ENCODE measurements at regions of chr19 and their contacts with region 1.

Region 1: GRCh38 chr19:10653715-10654492 is at the start of gene ILF3:
- DNase-seq: peak; percentile 100
- H3K4me3 ChIP-seq: peak within 1 kb of the TSS; percentile 92 to 94
- H3K4me3 Mint-ChIP-seq: peak within 1 kb of the TSS; percentile 93 to 98 (median 96)
- H3K27ac ChIP-seq: peak within 1 kb of the TSS; percentile 100
- H3K27ac Mint-ChIP-seq: peak within 1 kb of the TSS; percentile 98 to 100 (median 99)
- H3K4me1 ChIP-seq: peaks cover 57% of the 10 kb centered on the region
- H3K4me1 Mint-ChIP-seq: peaks cover 24 to 58% (median 39%) of the 10 kb centered on the region in 4 donors
- H3K27me3 ChIP-seq: no peaks in the 10 kb centered on the region
- H3K27me3 Mint-ChIP-seq: peaks cover 0 to 4% of the 10 kb centered on the region in 2 donors
- total RNA-seq, gene ILF3: 291 to 302 TPM

Region 2: GRCh38 chr19:10565567-10566407 is 88.1 kb before region 1 on chr19 and contains the start of gene KRI1:
- CTCF ChIA-PET with region 1: no interaction called
- POLR2A ChIA-PET with region 1: interaction called, 16 read pairs
- intact Hi-C with region 1: loop called (anchors 1 kb)
- DNase-seq: peak; percentile 98 to 100 (median 99)
- H3K4me3 ChIP-seq: peak within 1 kb of the TSS; percentile 95 to 97
- H3K4me3 Mint-ChIP-seq: peak within 1 kb of the TSS; percentile 90 to 99 (median 98)
- H3K27ac ChIP-seq: peak within 1 kb of the TSS; percentile 94
- H3K27ac Mint-ChIP-seq: peak within 1 kb of the TSS; percentile 95 to 99 (median 98)
- H3K4me1 ChIP-seq: peaks cover 37% of the 10 kb centered on the region
- H3K4me1 Mint-ChIP-seq: peaks cover 22 to 50% (median 33%) of the 10 kb centered on the region in 4 donors
- H3K27me3 ChIP-seq: no peaks in the 10 kb centered on the region
- H3K27me3 Mint-ChIP-seq: no peaks in the 10 kb centered on the region
- total RNA-seq, gene KRI1: 72.7 to 73.0 TPM

Region 3: GRCh38 chr19:10602330-10603083 is 51.4 kb before region 1 on chr19:
- CTCF ChIA-PET with region 1: interaction called, 3 read pairs
- POLR2A ChIA-PET with region 1: interaction called, 51 read pairs
- intact Hi-C with region 1: loop called (anchors 1 kb)
- DNase-seq: peak; percentile 82 to 84 (median 84)
- H3K4me3 ChIP-seq: peak overlapping the region; percentile 85 to 94
- H3K4me3 Mint-ChIP-seq: peak overlapping the region; percentile 98 to 99 (median 99)
- H3K27ac ChIP-seq: peak overlapping the region; percentile 96
- H3K27ac Mint-ChIP-seq: peak overlapping the region; percentile 99 to 100 (median 100)
- H3K4me1 ChIP-seq: peaks cover 29% of the 10 kb centered on the region
- H3K4me1 Mint-ChIP-seq: peaks cover 17 to 34% (median 21%) of the 10 kb centered on the region in 4 donors
- H3K27me3 ChIP-seq: no peaks in the 10 kb centered on the region
- H3K27me3 Mint-ChIP-seq: no peaks in the 10 kb centered on the region

Region 4: DNA sequence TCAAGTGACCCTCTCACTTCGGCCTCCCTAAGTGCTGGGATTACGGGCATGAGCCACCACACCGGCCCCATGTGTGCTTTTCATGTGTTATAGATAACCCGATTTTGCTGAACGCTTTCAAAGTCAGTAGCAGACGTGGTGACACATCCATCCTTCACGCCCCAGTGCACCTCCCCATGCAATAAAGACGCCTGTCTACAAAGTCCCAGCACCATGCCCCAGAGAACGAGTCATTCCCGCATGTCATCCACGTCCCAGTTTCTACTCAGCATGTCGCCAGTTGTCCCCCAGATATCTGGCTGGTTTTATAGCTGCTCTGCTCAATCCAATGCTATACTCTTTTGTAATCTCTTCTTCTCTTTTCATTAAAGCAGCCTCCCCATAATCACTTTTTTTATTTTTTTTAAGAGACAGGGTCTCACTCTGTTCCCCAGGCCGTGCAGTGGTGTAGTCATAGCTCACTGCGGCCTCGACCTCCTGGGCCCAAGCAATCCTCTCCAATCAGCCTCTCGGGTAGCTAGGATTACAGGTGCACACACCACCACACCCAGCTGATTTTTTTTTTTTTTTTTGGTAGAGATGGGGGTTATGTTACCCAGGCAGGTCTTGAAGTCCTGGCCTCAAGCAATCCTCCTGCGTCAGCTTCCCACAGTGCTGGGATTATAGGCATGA is 106.5 kb after region 1 on chr19:
- CTCF ChIA-PET with region 1: no interaction called
- POLR2A ChIA-PET with region 1: no interaction called
- intact Hi-C with region 1: loop called (anchors 2 kb)
- DNase-seq: peak in 1 of 5 donors; percentile 80
- H3K4me3 ChIP-seq: peak overlapping the region in 1 of 2 donors; percentile 20
- H3K4me3 Mint-ChIP-seq: peak overlapping the region; percentile 50 to 89 (median 80)
- H3K27ac ChIP-seq: peak overlapping the region; percentile 48
- H3K27ac Mint-ChIP-seq: peak overlapping the region; percentile 87 to 98 (median 95)
- H3K4me1 ChIP-seq: peaks cover 88% of the 10 kb centered on the region
- H3K4me1 Mint-ChIP-seq: peaks cover 51 to 94% (median 74%) of the 10 kb centered on the region in 4 donors
- H3K27me3 ChIP-seq: no peaks in the 10 kb centered on the region
- H3K27me3 Mint-ChIP-seq: no peaks in the 10 kb centered on the region

Region 5: GRCh38 chr19:10870955-10871603 is 217.2 kb after region 1 on chr19 and contains the start of gene CARM1:
- CTCF ChIA-PET with region 1: no interaction called
- POLR2A ChIA-PET with region 1: interaction called, 3 read pairs
- intact Hi-C with region 1: loop called (anchors 1 kb)
- DNase-seq: peak; percentile 99 to 100 (median 99)
- H3K4me3 ChIP-seq: peak within 1 kb of the TSS; percentile 47 to 55
- H3K4me3 Mint-ChIP-seq: peak within 1 kb of the TSS; percentile 81 to 94 (median 86)
- H3K27ac ChIP-seq: peak within 1 kb of the TSS; percentile 55
- H3K27ac Mint-ChIP-seq: peak within 1 kb of the TSS; percentile 76 to 96 (median 92)
- H3K4me1 ChIP-seq: peaks cover 20% of the 10 kb centered on the region
- H3K4me1 Mint-ChIP-seq: peaks cover 8 to 24% (median 16%) of the 10 kb centered on the region in 4 donors
- H3K27me3 ChIP-seq: no peaks in the 10 kb centered on the region
- H3K27me3 Mint-ChIP-seq: no peaks in the 10 kb centered on the region
- total RNA-seq, gene CARM1: 25.2 to 26.5 TPM

Measured in CD4-positive, alpha-beta memory T cell (primary cell).